ENCODE measurements at regions of chr14 and their contacts with region 1.

Region 1: GRCh38 chr14:28284546-28285300 is 481.9 kb upstream of the FOXG1 start:
- DNase-seq: no peak
- H3K4me3 Mint-ChIP-seq: no peak overlapping the region
- H3K27ac Mint-ChIP-seq: no peak overlapping the region
- H3K4me1 Mint-ChIP-seq: peaks cover 22% of the 10 kb centered on the region
- H3K27me3 Mint-ChIP-seq: no peaks in the 10 kb centered on the region
- CTCF ChIP-seq: no peak

Region 2: DNA sequence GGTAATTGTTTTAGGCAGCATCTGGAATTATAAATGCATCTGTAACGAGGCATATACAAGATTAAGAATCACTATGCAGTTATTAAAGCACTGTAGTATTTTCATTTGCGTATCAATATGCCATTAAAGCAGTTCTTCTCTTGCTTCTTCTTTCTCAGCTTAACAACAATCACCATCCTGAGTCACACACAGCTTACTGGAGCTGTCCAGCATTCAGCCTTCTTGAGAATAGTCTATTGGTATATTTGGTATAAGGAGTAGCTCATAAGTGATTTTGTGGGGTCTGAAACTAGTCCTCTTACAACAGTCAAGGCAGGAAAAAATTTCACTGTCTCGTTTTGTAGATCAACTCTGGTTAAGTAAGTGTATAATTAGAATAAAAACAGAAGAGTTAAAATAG is 41.1 kb before region 1 on chr14:
- CTCF ChIA-PET with region 1: no interaction called
- intact Hi-C with region 1: no loop called
- DNase-seq: no peak
- H3K4me3 Mint-ChIP-seq: no peak overlapping the region
- H3K27ac Mint-ChIP-seq: no peak overlapping the region
- H3K4me1 Mint-ChIP-seq: no peaks in the 10 kb centered on the region
- H3K27me3 Mint-ChIP-seq: no peaks in the 10 kb centered on the region
- CTCF ChIP-seq: no peak

Region 3: DNA sequence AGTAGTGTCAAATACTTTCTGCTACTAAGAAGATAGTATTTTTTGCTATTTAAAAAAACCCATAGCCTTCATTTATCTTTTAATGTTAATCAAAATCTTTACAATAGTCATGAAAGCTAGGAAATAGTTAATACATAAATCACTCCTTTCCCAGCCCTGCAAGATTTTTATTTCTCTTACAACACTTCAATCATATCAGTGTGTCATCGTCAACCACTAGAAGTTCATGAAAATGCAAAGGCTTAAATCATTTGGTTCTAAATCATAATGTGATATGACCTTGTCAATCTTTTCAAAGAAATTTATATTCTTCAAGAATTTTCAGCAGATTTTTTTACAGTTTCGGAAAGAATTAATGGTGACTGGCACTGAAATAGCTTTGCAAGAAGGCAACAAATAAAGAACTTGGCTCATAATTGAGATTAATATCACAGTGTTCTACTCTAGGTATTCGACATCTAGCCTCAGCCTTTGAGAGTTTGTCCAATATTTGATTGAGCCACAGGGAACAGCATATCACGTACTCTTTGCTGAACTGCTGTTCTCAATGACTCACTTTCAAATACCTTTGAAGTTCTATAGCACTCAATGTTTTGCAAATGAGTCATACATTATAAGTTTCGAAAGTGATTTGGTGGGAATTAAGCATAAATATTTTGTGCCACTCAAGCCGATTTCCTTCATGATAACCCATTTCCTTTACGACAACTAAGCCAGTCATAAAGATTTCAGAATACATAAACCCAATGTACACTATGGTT is 97.9 kb after region 1 on chr14:
- CTCF ChIA-PET with region 1: no interaction called
- intact Hi-C with region 1: loop called (anchors 5 kb)
- DNase-seq: peak; percentile 9
- H3K4me3 Mint-ChIP-seq: no peak overlapping the region
- H3K27ac Mint-ChIP-seq: peak overlapping the region; percentile 74
- H3K4me1 Mint-ChIP-seq: peaks cover 7% of the 10 kb centered on the region
- H3K27me3 Mint-ChIP-seq: no peaks in the 10 kb centered on the region
- CTCF ChIP-seq: no peak

Region 4: DNA sequence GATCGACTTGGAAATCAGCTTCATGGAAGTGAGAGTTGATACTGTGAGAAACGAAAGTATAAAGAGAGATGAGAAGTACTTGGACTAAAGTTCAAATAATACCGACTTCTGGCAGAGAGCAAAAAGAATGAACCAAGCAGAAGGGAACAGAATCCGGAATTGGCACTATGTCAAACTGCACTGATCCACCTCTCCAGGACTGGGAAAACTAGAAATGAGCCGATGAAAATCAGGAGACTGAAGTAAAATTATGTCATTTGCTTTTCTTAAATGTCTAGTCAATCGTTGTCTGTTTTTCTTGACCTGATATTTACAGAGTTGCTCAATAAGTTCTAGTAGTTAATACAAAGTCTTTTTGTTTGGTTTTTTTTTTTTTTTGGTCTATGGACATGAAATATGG is 318.9 kb after region 1 on chr14:
- CTCF ChIA-PET with region 1: no interaction called
- intact Hi-C with region 1: loop called (anchors 5 kb)
- DNase-seq: no peak
- H3K4me3 Mint-ChIP-seq: peak overlapping the region; percentile 57
- H3K27ac Mint-ChIP-seq: peak overlapping the region; percentile 66
- H3K4me1 Mint-ChIP-seq: peaks cover 20% of the 10 kb centered on the region
- H3K27me3 Mint-ChIP-seq: no peaks in the 10 kb centered on the region
- CTCF ChIP-seq: no peak

Measured in Calu3 (cell line).